Spleen (tissue), 13 donors: ENCODE measurements at regions of chr18 and their contacts with region 1.

Region 1: DNA sequence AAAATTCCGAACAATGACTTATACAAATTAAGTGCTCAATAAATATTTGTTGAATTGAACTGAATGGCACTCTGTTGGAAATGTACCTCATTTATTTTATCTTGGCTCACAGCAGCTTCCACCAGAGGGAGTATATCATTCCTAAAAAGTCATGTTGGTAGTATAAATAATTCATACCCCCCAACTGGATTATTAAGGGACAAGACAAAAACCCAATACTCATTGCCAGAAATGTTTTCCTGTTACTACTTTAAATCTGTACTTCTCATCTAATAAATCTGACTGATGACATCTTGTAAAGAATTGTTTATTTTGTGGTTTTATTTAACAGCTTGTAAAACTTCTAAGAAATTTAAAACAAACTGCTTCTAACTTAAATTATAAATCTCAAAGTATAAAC is 163.9 kb downstream of the CDH2 start:
- DNase-seq: no peak
- H3K4me3 ChIP-seq: no peak overlapping the region
- H3K27ac ChIP-seq: no peak overlapping the region
- H3K4me1 ChIP-seq: no peaks in the 10 kb centered on the region
- H3K27me3 ChIP-seq: no peaks in the 10 kb centered on the region
- CTCF ChIP-seq: peak in 3 of 11 experiments; percentile 20 to 44 (median 35)
- POLR2A ChIP-seq: no peak

Region 2: DNA sequence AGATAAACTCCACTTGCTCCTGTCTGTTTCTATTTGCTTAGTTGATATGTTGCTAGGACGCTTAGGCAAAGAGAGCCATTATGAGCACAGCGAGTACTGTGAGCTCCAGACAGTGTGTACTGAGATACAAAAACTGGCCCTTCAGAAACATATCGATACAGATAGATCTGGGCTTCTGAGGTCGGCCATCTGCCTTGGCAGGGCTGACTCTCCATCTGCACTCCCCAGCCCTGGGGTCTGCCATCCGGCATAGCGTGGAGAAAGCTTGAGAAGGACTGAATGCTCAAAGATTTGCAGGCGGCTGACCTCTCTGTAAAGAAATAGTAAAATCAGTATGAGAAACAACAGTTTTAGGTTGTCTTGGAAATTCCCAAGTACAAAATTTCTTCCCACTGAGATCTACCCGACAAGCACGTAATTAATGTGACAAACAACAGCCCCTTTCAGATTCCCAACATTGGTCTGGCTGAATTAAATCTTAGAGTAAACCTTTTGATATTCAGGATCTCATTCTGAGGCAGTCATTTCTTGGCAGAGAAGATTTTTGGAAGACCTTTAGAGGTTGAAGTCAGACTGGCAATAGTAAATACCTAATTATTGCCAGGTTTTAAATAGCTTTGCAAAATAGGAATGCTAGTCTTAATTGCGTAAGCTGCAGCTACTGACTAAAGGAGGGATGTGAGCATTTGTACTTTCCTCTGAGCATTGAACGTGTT is 955.4 kb before region 1 on chr18:
- intact Hi-C with region 1: no loop called
- DNase-seq: no peak
- H3K4me3 ChIP-seq: no peak overlapping the region
- H3K27ac ChIP-seq: peak overlapping the region in 7 of 8 donors; percentile 30 to 66 (median 53)
- H3K4me1 ChIP-seq: no peaks in the 10 kb centered on the region
- H3K27me3 ChIP-seq: no peaks in the 10 kb centered on the region
- CTCF ChIP-seq: no peak
- POLR2A ChIP-seq: no peak

Region 3: GRCh38 chr18:28176933-28177827 is 164.1 kb after region 1 on chr18 and contains the start of gene CDH2:
- intact Hi-C with region 1: loop called (anchors 10 kb)
- DNase-seq: peak; percentile 83
- H3K4me3 ChIP-seq: peak within 1 kb of the TSS; percentile 34 to 74 (median 56)
- H3K27ac ChIP-seq: peak within 1 kb of the TSS; percentile 19 to 85 (median 80)
- H3K4me1 ChIP-seq: peaks cover 0 to 37% (median 24%) of the 10 kb centered on the region in 6 donors
- H3K27me3 ChIP-seq: peaks cover 4 to 76% (median 30%) of the 10 kb centered on the region in 7 donors
- CTCF ChIP-seq: peak in 2 of 11 experiments; percentile 10 to 17
- POLR2A ChIP-seq: no peak
- total RNA-seq, gene CDH2: 14.3 to 40.2 (median 30.4) TPM